Gastrocnemius medialis (tissue), 4 donors: ENCODE measurements at regions of chr14 and their contacts with region 1.

Region 1: GRCh38 chr14:67943947-67944346 is 124.4 kb downstream of the RAD51B start:
- DNase-seq: peak; percentile 46 to 51
- ATAC-seq: peak; percentile 75 to 81
- H3K4me3 ChIP-seq: no peak overlapping the region
- H3K27ac ChIP-seq: peak overlapping the region in 1 of 4 donors; percentile 20
- H3K4me1 ChIP-seq: peaks cover 20 to 29% of the 10 kb centered on the region in 2 donors
- H3K27me3 ChIP-seq: no peaks in the 10 kb centered on the region
- CTCF ChIP-seq: peak; percentile 64 to 78 (median 75)
- POLR2A ChIP-seq: no peak

Region 2: GRCh38 chr14:67908052-67908754 is 35.7 kb before region 1 on chr14:
- in situ Hi-C with region 1: no loop called
- intact Hi-C with region 1: no loop called
- DNase-seq: no peak
- ATAC-seq: no peak
- H3K4me3 ChIP-seq: no peak overlapping the region
- H3K27ac ChIP-seq: no peak overlapping the region
- H3K4me1 ChIP-seq: peaks cover 5 to 14% of the 10 kb centered on the region in 2 donors
- H3K27me3 ChIP-seq: no peaks in the 10 kb centered on the region
- CTCF ChIP-seq: no peak
- POLR2A ChIP-seq: no peak

Region 3: GRCh38 chr14:68140111-68140741 is 196.3 kb after region 1 on chr14:
- in situ Hi-C with region 1: no loop called
- intact Hi-C with region 1: loop called (anchors 5 kb)
- DNase-seq: peak in 1 of 2 donors; percentile 32
- ATAC-seq: peak; percentile 21 to 35
- H3K4me3 ChIP-seq: no peak overlapping the region
- H3K27ac ChIP-seq: peak overlapping the region; percentile 43 to 70 (median 63)
- H3K4me1 ChIP-seq: peaks cover 48 to 59% of the 10 kb centered on the region in 2 donors
- H3K27me3 ChIP-seq: no peaks in the 10 kb centered on the region
- CTCF ChIP-seq: no peak
- POLR2A ChIP-seq: no peak

Region 4: DNA sequence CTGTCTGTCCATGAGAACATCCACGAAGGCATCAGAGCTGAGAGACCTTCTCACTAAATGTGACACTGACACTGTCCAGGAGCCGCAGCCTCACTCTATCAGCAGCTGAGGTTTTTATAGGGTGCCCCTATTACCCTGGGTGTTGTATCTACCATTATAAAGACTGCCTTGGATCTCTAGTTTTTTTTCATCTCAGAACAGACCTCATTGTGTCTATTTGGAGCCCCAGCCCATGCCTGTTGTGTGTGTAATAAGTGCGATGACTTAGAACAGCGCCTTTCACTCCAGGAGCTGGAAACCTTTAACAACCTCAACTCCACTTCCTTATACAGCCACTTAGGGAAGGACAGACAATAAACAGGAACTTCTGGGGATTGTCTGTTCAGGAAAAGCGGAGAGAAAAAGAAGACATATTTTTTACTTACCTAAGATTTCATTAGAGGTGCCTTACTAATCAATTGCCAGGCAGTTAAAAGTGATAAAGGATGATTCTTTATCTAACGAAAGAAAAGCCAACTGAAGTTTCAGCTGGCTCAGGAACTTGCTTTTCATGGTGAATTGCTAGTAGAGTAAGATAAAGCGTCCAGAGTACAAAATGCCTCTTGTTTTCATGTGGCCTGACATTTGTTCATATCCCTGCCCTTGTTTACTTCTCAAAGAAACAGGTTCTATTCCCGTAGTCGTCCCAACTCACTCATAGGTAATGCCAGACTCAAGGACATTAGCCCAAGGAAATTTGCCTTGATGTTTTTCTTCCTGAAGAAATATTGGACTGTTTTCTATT is 296.2 kb after region 1 on chr14:
- in situ Hi-C with region 1: loop called (anchors 5 to 25 kb)
- intact Hi-C with region 1: loop called (anchors 2 kb)
- DNase-seq: no peak
- ATAC-seq: no peak
- H3K4me3 ChIP-seq: no peak overlapping the region
- H3K27ac ChIP-seq: peak overlapping the region; percentile 24 to 61 (median 39)
- H3K4me1 ChIP-seq: peaks cover 45 to 59% of the 10 kb centered on the region in 2 donors
- H3K27me3 ChIP-seq: no peaks in the 10 kb centered on the region
- CTCF ChIP-seq: no peak
- POLR2A ChIP-seq: no peak

Region 5: DNA sequence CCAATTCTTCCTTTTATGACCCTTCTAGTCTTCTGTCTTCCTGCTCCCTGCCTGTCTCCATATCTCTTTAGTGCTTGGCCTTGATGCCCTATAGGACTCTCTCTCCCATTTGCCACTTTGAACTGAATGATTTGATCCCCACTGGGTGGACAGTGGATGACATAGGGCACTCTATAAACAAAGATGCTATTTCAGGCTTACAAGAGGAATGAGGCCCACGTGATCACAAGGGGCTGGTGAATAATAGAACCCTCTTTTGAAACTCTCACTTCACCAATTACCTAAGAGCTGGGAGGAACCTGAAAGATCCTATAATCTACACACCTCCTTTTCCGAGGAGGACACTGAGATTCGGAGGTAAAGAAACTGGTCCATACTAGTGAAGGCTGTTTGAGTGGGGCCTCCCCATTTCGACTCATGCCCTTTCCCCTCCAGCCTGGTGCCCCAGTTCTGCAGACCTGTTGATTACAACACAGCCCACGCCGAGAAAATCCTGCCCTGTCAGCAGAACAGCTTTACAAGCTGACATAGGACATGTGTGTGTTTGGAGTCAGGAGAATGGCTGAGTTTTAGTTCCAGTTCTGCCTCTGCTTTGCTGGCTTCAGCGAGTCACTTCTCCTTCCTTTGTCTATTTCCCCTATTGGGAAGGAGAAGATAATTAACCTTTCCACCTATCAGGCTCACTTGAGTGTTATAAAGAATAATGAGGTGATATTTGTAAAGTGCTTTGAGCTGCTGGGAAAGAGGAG is 448.6 kb after region 1 on chr14:
- in situ Hi-C with region 1: no loop called
- intact Hi-C with region 1: loop called (anchors 5 kb)
- DNase-seq: peak; percentile 47 to 55
- ATAC-seq: peak; percentile 24 to 55
- H3K4me3 ChIP-seq: no peak overlapping the region
- H3K27ac ChIP-seq: peak overlapping the region; percentile 32 to 60 (median 44)
- H3K4me1 ChIP-seq: peaks cover 22 to 24% of the 10 kb centered on the region in 2 donors
- H3K27me3 ChIP-seq: no peaks in the 10 kb centered on the region
- CTCF ChIP-seq: no peak
- POLR2A ChIP-seq: no peak

Region 6: DNA sequence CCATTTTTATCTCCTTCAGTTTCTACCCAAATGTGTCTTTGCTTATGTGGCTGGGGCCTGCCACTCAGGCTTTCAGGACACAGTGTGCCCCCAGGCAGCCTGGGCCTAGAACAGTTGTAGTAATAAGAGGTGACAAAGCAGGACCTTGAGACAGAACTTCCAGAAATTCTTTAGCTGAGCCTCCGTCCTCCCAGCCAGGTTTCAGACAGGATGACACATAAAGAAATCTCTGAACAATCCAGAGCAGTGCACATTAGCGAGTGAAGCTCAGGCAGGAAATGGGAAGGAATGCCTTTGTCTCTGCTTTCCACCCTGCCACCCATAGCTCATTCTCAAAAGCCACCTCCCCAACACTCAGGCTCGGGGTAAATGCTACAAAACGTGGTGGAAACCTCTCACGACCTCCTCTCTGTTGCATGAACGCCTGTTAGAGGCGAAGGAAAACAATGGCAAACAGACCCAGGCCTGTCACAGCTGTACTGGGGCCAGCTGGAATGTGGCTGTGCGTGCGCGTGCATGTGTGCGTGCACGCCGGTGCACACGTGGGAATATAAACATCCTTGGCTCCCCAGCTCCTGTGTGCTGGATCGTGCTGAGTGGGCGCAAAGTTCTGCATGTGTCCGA is 562.2 kb after region 1 on chr14:
- in situ Hi-C with region 1: loop called in 1 of 4 experiments (anchors 25 kb)
- intact Hi-C with region 1: no loop called
- DNase-seq: no peak
- ATAC-seq: peak in 1 of 2 donors; percentile 27
- H3K4me3 ChIP-seq: no peak overlapping the region
- H3K27ac ChIP-seq: no peak overlapping the region
- H3K4me1 ChIP-seq: peaks cover 14 to 15% of the 10 kb centered on the region in 2 donors
- H3K27me3 ChIP-seq: no peaks in the 10 kb centered on the region
- CTCF ChIP-seq: no peak
- POLR2A ChIP-seq: no peak

Region 7: GRCh38 chr14:68676511-68676943 is 732.6 kb after region 1 on chr14:
- in situ Hi-C with region 1: no loop called
- intact Hi-C with region 1: loop called (anchors 10 kb)
- DNase-seq: no peak
- ATAC-seq: no peak
- H3K4me3 ChIP-seq: no peak overlapping the region
- H3K27ac ChIP-seq: no peak overlapping the region
- H3K4me1 ChIP-seq: peaks cover 21 to 27% of the 10 kb centered on the region in 2 donors
- H3K27me3 ChIP-seq: no peaks in the 10 kb centered on the region
- CTCF ChIP-seq: no peak
- POLR2A ChIP-seq: no peak

Region 8: DNA sequence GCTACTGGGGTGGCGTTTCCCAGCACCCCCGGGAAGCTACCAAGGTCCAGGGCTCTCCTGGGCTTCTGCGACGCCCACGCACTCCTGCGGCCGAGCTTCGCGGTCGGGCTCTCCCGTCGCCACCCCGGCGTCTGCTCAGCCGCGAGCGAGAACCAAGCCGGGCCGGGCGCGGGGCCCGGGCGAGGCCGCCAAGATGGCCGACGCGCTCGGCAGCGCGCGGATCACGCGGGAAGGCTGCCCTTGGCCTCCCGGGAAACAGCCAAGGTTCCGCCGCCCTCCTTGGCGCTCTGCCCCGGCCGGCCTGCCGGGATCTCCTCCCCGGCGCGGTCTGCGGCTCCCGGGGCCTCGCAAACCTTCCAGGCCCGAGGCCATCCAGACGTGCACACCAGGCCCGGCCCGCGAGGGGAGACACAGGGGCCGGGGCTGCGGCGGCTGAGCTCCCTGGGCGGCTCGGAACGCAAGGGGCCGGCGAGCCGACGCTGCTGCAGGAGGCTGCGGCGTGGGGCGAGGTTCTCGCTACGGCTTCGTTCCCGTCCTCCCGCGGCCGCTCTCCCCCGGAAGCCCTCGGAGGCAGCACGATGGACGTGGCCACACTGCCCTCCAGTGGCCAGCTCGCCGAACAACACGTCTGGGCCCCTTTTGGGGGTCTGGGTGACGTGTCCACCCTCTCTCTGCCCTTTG is 872.5 kb after region 1 on chr14:
- in situ Hi-C with region 1: loop called in 1 of 4 experiments (anchors 10 kb)
- intact Hi-C with region 1: loop called (anchors 1 kb)
- DNase-seq: peak; percentile 81 to 85
- ATAC-seq: peak; percentile 86 to 91
- H3K4me3 ChIP-seq: peak overlapping the region; percentile 55 to 84 (median 75)
- H3K27ac ChIP-seq: peak overlapping the region; percentile 94 to 100 (median 96)
- H3K4me1 ChIP-seq: peaks cover 34 to 36% of the 10 kb centered on the region in 2 donors
- H3K27me3 ChIP-seq: no peaks in the 10 kb centered on the region
- CTCF ChIP-seq: peak; percentile 97 to 100 (median 98)
- POLR2A ChIP-seq: peak; percentile 51 to 65